ENCODE measurements at regions of chr9 and their contacts with region 1.

Region 1: DNA sequence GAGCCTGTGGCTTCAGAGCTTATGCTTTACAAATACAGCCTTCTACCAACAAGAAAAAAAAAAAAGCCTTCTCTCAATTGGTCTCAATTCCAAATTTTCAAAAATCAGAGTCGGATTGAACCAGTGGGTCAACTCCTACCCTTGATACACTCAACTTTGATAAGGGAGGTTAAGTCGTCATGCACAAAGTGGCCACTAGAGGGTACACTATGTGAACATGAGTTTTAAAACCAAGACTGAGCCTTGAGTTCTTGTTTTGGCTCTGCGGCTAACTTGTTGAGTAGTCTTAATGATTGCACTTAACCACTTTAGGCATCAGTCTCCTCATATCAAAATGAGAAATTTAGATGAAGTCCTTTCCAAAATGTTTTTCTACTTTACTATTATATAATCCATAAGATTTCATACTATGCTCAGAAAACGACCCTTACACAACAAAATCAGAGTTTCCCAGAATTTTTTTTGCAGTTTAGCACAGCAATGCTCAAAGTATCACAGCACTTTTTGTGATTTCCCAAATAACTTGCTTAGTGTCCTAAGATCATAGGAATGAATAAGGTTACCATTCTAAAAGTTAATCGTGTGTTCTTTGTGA is 92.9 kb upstream of the MTAP start:
- DNase-seq: peak; percentile 57
- H3K4me3 ChIP-seq: no peak overlapping the region
- H3K27ac ChIP-seq: no peak overlapping the region
- H3K4me1 ChIP-seq: peaks cover 37% of the 10 kb centered on the region
- H3K27me3 ChIP-seq: no peaks in the 10 kb centered on the region
- CTCF ChIP-seq: peak; percentile 83 to 96

Region 2: GRCh38 chr9:21585756-21586752 is 123.5 kb before region 1 on chr9:
- CTCF ChIA-PET with region 1: no interaction called
- dilution Hi-C with region 1: no loop called
- in situ Hi-C with region 1: no loop called
- intact Hi-C with region 1: loop called (anchors 2 kb)
- DNase-seq: no peak
- H3K4me3 ChIP-seq: no peak overlapping the region
- H3K27ac ChIP-seq: no peak overlapping the region
- H3K4me1 ChIP-seq: peaks cover 17% of the 10 kb centered on the region
- H3K27me3 ChIP-seq: no peaks in the 10 kb centered on the region
- CTCF ChIP-seq: peak; percentile 25 to 47

Region 3: DNA sequence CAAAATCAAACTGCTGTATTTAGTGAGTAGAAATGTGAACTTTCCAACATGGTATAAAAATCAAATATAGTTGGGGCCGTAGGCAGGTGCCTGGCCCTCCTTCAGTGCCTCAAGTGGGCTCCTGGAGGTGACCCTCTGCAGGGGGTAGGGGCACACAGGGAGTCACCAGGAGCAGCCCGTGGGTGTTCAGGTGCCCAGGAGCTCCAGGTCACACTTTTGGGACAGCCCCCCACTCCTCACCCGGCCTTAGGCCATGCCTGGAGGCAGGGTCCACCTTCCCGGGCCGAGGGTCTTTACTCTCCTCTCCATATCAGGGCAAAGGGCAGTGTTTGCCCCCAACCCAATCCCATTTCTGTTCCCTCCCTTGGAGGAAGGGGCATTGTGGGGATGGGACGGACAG is 15.1 kb before region 1 on chr9:
- CTCF ChIA-PET with region 1: interaction called, 10 read pairs
- dilution Hi-C with region 1: no loop called
- in situ Hi-C with region 1: no loop called
- intact Hi-C with region 1: no loop called
- DNase-seq: no peak
- H3K4me3 ChIP-seq: no peak overlapping the region
- H3K27ac ChIP-seq: no peak overlapping the region
- H3K4me1 ChIP-seq: peaks cover 12% of the 10 kb centered on the region
- H3K27me3 ChIP-seq: no peaks in the 10 kb centered on the region
- CTCF ChIP-seq: no peak

Region 4: DNA sequence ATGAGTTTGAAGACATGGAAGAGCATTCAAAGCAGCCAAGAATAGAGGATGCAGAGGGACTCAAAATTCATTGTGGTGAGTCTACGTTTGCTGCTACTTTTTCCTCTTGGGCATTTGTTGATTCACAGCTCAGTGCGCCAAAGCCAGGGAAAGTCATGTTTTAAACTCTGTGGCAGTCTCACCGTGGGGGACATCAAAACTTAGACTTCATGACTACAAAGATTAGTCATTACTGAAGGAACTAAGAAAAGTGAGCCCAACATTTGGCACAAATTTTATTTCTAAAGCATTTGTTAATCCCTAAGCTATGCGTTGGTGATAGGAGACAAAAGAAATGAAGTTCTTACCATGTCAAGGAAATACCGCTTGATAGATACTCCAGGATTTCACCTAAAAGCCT is 19.2 kb after region 1 on chr9:
- CTCF ChIA-PET with region 1: no interaction called
- dilution Hi-C with region 1: no loop called
- in situ Hi-C with region 1: no loop called
- intact Hi-C with region 1: no loop called
- DNase-seq: no peak
- H3K4me3 ChIP-seq: no peak overlapping the region
- H3K27ac ChIP-seq: no peak overlapping the region
- H3K4me1 ChIP-seq: no peaks in the 10 kb centered on the region
- H3K27me3 ChIP-seq: no peaks in the 10 kb centered on the region
- CTCF ChIP-seq: no peak

Region 5: DNA sequence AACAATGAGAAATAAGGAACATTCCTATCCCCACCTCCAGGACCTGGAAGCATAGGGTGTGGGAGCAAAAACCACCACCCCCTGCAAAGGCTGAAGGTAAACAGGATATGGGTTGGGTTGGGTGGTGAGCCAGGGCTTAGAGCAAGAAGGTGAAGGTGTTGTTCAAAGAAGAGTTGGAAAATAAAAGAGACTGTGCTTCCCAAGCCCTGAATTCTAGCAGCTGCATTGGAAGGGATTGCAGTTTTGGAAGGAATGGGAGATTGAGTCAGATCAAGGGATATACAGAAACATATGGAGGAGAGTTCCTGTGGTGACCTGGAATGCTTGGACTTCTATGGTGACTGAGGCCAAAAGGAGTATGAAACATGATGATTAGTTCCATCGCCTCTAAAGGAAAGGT is 68.1 kb after region 1 on chr9:
- CTCF ChIA-PET with region 1: no interaction called
- dilution Hi-C with region 1: no loop called
- in situ Hi-C with region 1: loop called (anchors 5 kb)
- intact Hi-C with region 1: loop called (anchors 2 kb)
- DNase-seq: peak; percentile 61
- H3K4me3 ChIP-seq: peak overlapping the region in 1 of 3 experiments; percentile 22
- H3K27ac ChIP-seq: peak overlapping the region; percentile 74
- H3K4me1 ChIP-seq: peaks cover 38% of the 10 kb centered on the region
- H3K27me3 ChIP-seq: no peaks in the 10 kb centered on the region
- CTCF ChIP-seq: no peak

Region 6: GRCh38 chr9:22238809-22239684 is 529.5 kb after region 1 on chr9:
- CTCF ChIA-PET with region 1: no interaction called
- dilution Hi-C with region 1: no loop called
- in situ Hi-C with region 1: no loop called
- intact Hi-C with region 1: loop called (anchors 10 kb)
- DNase-seq: peak; percentile 71
- H3K4me3 ChIP-seq: peak overlapping the region in 2 of 3 experiments; percentile 15 to 34
- H3K27ac ChIP-seq: peak overlapping the region; percentile 87
- H3K4me1 ChIP-seq: peaks cover 45% of the 10 kb centered on the region
- H3K27me3 ChIP-seq: no peaks in the 10 kb centered on the region
- CTCF ChIP-seq: peak; percentile 39 to 60

Measured in mammary epithelial cell (primary cell).